T-cell (primary cell): ENCODE measurements at regions of chr17 and their contacts with region 1.

Region 1: GRCh38 chr17:42019509-42020404 is at the start of gene NKIRAS2:
- DNase-seq: peak; percentile 84 to 95 (median 90)
- ATAC-seq: peak; percentile 74 to 80 (median 76)
- H3K4me3 ChIP-seq: peak within 1 kb of the TSS; percentile 74 to 79
- H3K4me3 Mint-ChIP-seq: peak within 1 kb of the TSS; percentile 93 to 100 (median 99)
- H3K27ac ChIP-seq: peak within 1 kb of the TSS; percentile 58
- H3K27ac Mint-ChIP-seq: peak within 1 kb of the TSS; percentile 67 to 82
- H3K4me1 ChIP-seq: peaks cover 30 to 47% of the 10 kb centered on the region in 2 experiments
- H3K4me1 Mint-ChIP-seq: peaks cover 57 to 72% (median 66%) of the 10 kb centered on the region in 3 donors
- H3K27me3 ChIP-seq: no peaks in the 10 kb centered on the region
- H3K27me3 Mint-ChIP-seq: no peaks in the 10 kb centered on the region
- total RNA-seq, gene NKIRAS2: 11.0 to 19.6 (median 18.4) TPM

Region 2: GRCh38 chr17:41930009-41930832 is 89.5 kb before region 1 on chr17 and contains the start of gene ODAD4:
- CTCF ChIA-PET with region 1: interaction called in 1 of 2 experiments, 9 read pairs
- POLR2A ChIA-PET with region 1: interaction called in 1 of 2 experiments, 11 read pairs
- DNase-seq: peak; percentile 87 to 99 (median 97)
- ATAC-seq: peak; percentile 97 to 100 (median 99)
- H3K4me3 ChIP-seq: peak within 1 kb of the TSS; percentile 64 to 73
- H3K4me3 Mint-ChIP-seq: peak within 1 kb of the TSS; percentile 85 to 100 (median 95)
- H3K27ac ChIP-seq: peak within 1 kb of the TSS; percentile 84
- H3K27ac Mint-ChIP-seq: peak within 1 kb of the TSS; percentile 94 to 100
- H3K4me1 ChIP-seq: peaks cover 7 to 20% of the 10 kb centered on the region in 2 experiments
- H3K4me1 Mint-ChIP-seq: peaks cover 22 to 28% (median 28%) of the 10 kb centered on the region in 3 donors
- H3K27me3 ChIP-seq: peaks cover 0 to 4% of the 10 kb centered on the region in 2 experiments
- H3K27me3 Mint-ChIP-seq: no peaks in the 10 kb centered on the region
- total RNA-seq, gene ODAD4: 0.22 to 2.0 (median 0.39) TPM in 4 of 5 donors, not detected in the other

Region 3: GRCh38 chr17:41966463-41967140 is 53.2 kb before region 1 on chr17 and contains the start of gene CNP:
- CTCF ChIA-PET with region 1: interaction called in 1 of 2 experiments, 8 read pairs
- POLR2A ChIA-PET with region 1: interaction called, 3 to 15 read pairs
- DNase-seq: peak; percentile 77 to 95 (median 86)
- ATAC-seq: peak; percentile 83 to 90 (median 85)
- H3K4me3 ChIP-seq: peak within 1 kb of the TSS; percentile 81 to 91
- H3K4me3 Mint-ChIP-seq: peak within 1 kb of the TSS; percentile 81 to 92 (median 83)
- H3K27ac ChIP-seq: peak within 1 kb of the TSS; percentile 70
- H3K27ac Mint-ChIP-seq: peak within 1 kb of the TSS; percentile 93
- H3K4me1 ChIP-seq: peaks cover 5 to 43% of the 10 kb centered on the region in 2 experiments
- H3K4me1 Mint-ChIP-seq: peaks cover 42 to 53% (median 46%) of the 10 kb centered on the region in 3 donors
- H3K27me3 ChIP-seq: peaks cover 0 to 8% of the 10 kb centered on the region in 2 experiments
- H3K27me3 Mint-ChIP-seq: no peaks in the 10 kb centered on the region
- total RNA-seq, gene CNP: 24.4 to 36.2 (median 34.3) TPM

Region 4: GRCh38 chr17:42097691-42098631 is 78.2 kb after region 1 on chr17 and contains the start of gene ZNF385C:
- CTCF ChIA-PET with region 1: no interaction called
- POLR2A ChIA-PET with region 1: no interaction called
- DNase-seq: peak in 21 of 35 experiments; percentile 23 to 66 (median 38)
- ATAC-seq: peak; percentile 80 to 91 (median 87)
- H3K4me3 ChIP-seq: peak within 1 kb of the TSS; percentile 33 to 46
- H3K4me3 Mint-ChIP-seq: peak within 1 kb of the TSS; percentile 50 to 66 (median 52)
- H3K27ac ChIP-seq: no peak within 1 kb of the TSS
- H3K27ac Mint-ChIP-seq: no peak within 1 kb of the TSS
- H3K4me1 ChIP-seq: peaks cover 6 to 16% of the 10 kb centered on the region in 2 experiments
- H3K4me1 Mint-ChIP-seq: peaks cover 6 to 10% (median 9%) of the 10 kb centered on the region in 3 donors
- H3K27me3 ChIP-seq: peaks cover 0 to 43% of the 10 kb centered on the region in 2 experiments
- H3K27me3 Mint-ChIP-seq: peaks cover 22 to 27% of the 10 kb centered on the region in 2 donors
- total RNA-seq, gene ZNF385C: 0.16 to 1.0 (median 0.46) TPM

Region 5: GRCh38 chr17:42112552-42113176 is 92.9 kb after region 1 on chr17 and contains the start of gene DHX58:
- CTCF ChIA-PET with region 1: interaction called, 7 to 11 read pairs
- POLR2A ChIA-PET with region 1: interaction called, 3 to 4 read pairs
- DNase-seq: peak; percentile 50 to 92 (median 77)
- ATAC-seq: peak; percentile 83 to 88 (median 84)
- H3K4me3 ChIP-seq: peak within 1 kb of the TSS; percentile 56 to 70
- H3K4me3 Mint-ChIP-seq: peak within 1 kb of the TSS; percentile 84 to 90 (median 88)
- H3K27ac ChIP-seq: peak within 1 kb of the TSS; percentile 92
- H3K27ac Mint-ChIP-seq: peak within 1 kb of the TSS; percentile 94 to 98
- H3K4me1 ChIP-seq: peaks cover 16 to 53% of the 10 kb centered on the region in 2 experiments
- H3K4me1 Mint-ChIP-seq: peaks cover 43 to 66% (median 51%) of the 10 kb centered on the region in 3 donors
- H3K27me3 ChIP-seq: no peaks in the 10 kb centered on the region
- H3K27me3 Mint-ChIP-seq: no peaks in the 10 kb centered on the region
- total RNA-seq, gene DHX58: 38.2 to 63.0 (median 41.7) TPM

Region 6: DNA sequence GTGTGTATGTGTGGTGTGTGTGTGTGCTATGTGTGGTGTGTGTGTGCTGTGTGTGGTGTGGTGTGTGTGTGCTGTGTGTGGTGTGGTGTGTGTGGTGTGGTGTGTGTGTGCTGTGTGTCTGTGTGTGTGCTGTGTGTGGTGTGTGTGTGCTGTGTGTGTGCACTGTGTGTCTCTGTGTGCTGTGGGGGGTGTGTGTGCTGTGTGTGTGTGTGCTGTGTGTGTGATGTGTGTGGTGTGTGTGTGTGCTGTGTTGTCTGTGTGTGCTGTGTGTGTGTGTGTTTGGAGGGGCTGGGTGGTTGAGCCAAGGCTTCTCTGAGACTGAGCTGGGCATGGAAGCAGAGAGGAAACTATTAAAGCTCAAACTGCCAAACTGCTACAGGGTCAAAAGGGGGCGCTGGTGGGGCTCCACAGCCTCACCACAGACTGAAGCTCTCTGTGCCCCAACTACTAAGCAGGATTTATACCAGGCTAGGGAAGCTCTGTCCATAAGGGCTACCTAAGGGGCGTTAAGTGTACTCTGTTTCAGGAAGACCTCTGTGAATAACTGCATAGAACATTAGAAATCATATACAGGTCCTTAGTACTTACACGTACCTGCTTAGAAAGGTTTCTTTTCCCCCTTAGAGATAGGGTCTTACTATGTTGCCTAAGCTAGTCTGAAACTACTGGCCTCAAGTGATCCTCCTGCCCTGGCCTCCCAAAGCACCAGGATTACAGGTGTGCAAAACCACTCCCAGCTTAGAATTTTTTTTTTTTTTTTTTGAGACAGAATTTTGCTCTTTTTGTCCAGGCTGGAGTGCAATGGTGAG is 202.4 kb after region 1 on chr17:
- CTCF ChIA-PET with region 1: no interaction called
- POLR2A ChIA-PET with region 1: no interaction called
- DNase-seq: peak; percentile 7 to 85 (median 57)
- ATAC-seq: peak; percentile 87 to 95 (median 90)
- H3K4me3 ChIP-seq: no peak overlapping the region
- H3K4me3 Mint-ChIP-seq: no peak overlapping the region
- H3K27ac ChIP-seq: no peak overlapping the region
- H3K27ac Mint-ChIP-seq: peak overlapping the region; percentile 29 to 31
- H3K4me1 ChIP-seq: peaks cover 0 to 5% of the 10 kb centered on the region in 2 experiments
- H3K4me1 Mint-ChIP-seq: peaks cover 0 to 14% (median 10%) of the 10 kb centered on the region in 3 donors
- H3K27me3 ChIP-seq: no peaks in the 10 kb centered on the region
- H3K27me3 Mint-ChIP-seq: no peaks in the 10 kb centered on the region

Region 7: GRCh38 chr17:42613676-42614295 is 594.0 kb after region 1 on chr17:
- CTCF ChIA-PET with region 1: no interaction called
- POLR2A ChIA-PET with region 1: no interaction called
- DNase-seq: no peak
- ATAC-seq: no peak
- H3K4me3 ChIP-seq: no peak overlapping the region
- H3K4me3 Mint-ChIP-seq: no peak overlapping the region
- H3K27ac ChIP-seq: no peak overlapping the region
- H3K27ac Mint-ChIP-seq: no peak overlapping the region
- H3K4me1 ChIP-seq: peaks cover 0 to 12% of the 10 kb centered on the region in 2 experiments
- H3K4me1 Mint-ChIP-seq: peaks cover under 1 to 12% (median 6%) of the 10 kb centered on the region in 3 donors
- H3K27me3 ChIP-seq: no peaks in the 10 kb centered on the region
- H3K27me3 Mint-ChIP-seq: no peaks in the 10 kb centered on the region